ENCODE measurements at regions of chr11 and their contacts with region 1.

Region 1: DNA sequence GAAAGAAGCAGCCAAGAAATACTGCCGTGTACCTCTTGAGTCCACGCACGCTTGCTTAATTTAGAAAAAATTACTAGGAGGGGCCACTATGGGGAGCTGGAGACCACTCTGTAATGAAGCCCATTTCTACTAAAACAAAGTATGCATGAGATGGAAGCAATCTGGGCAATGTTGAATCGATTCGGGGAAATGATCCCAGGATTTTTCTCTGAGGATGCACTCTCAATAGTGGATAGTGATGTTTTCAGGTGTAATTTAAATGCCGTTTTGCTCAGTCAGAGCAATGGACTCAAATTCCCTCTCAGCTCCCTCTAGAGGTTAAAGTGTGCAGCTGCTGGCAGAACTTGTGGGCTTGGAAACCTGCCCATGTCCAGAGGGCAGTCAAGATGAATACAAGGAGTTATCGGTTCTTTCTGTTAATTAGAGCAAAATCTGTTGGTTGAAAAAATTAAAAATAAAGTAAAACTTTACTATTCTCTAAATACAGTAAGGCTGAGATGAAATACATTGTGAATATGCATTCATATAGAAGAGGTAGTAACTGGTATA is 64.1 kb downstream of the ME3 start:
- DNase-seq: peak; percentile 70
- H3K4me3 Mint-ChIP-seq: no peak overlapping the region
- H3K27ac Mint-ChIP-seq: no peak overlapping the region
- H3K4me1 Mint-ChIP-seq: peaks cover 29% of the 10 kb centered on the region
- H3K27me3 Mint-ChIP-seq: no peaks in the 10 kb centered on the region

Region 2: DNA sequence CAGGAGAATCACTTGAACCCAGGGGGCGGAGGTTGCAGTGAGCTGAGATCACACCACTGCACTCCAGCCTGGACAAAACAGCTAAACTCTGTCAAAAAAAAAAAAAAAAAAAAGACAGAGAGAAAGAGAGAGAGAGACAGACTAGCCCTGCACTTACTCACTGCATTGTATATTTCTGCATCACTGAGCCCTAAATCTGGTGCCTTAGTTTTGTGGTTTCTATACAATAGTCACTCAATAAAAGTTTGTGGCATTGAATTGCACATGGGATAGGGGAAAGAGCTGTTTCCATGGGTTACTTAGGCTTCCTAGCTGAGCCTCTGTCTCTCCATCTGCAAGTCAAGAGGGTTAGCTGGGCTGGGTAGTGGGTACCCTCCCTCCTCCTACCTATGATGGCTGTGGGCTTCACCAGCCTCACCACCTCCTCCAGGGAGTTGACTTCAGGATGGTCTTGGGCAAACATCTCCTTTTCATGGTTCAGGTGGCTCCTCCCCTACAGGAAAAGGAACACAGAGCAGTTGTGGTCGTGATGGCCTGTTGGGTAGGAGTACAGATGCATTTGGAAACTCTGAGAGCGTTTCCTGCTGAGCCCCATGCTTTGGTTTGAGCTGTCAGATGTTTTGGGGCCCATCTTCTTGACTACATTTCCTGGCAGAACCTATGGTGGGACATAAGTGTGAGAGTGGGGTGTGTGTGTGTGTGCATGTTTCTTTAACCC is 160.4 kb before region 1 on chr11:
- CTCF ChIA-PET with region 1: interaction called, 72 read pairs
- intact Hi-C with region 1: no loop called
- DNase-seq: peak; percentile 63
- H3K4me3 Mint-ChIP-seq: no peak overlapping the region
- H3K27ac Mint-ChIP-seq: no peak overlapping the region
- H3K4me1 Mint-ChIP-seq: peaks cover 24% of the 10 kb centered on the region
- H3K27me3 Mint-ChIP-seq: no peaks in the 10 kb centered on the region

Region 3: GRCh38 chr11:86620891-86621521 is 12.7 kb after region 1 on chr11:
- CTCF ChIA-PET with region 1: interaction called, 15 read pairs
- intact Hi-C with region 1: no loop called
- DNase-seq: no peak
- H3K4me3 Mint-ChIP-seq: no peak overlapping the region
- H3K27ac Mint-ChIP-seq: no peak overlapping the region
- H3K4me1 Mint-ChIP-seq: peaks cover 7% of the 10 kb centered on the region
- H3K27me3 Mint-ChIP-seq: no peaks in the 10 kb centered on the region

Region 4: DNA sequence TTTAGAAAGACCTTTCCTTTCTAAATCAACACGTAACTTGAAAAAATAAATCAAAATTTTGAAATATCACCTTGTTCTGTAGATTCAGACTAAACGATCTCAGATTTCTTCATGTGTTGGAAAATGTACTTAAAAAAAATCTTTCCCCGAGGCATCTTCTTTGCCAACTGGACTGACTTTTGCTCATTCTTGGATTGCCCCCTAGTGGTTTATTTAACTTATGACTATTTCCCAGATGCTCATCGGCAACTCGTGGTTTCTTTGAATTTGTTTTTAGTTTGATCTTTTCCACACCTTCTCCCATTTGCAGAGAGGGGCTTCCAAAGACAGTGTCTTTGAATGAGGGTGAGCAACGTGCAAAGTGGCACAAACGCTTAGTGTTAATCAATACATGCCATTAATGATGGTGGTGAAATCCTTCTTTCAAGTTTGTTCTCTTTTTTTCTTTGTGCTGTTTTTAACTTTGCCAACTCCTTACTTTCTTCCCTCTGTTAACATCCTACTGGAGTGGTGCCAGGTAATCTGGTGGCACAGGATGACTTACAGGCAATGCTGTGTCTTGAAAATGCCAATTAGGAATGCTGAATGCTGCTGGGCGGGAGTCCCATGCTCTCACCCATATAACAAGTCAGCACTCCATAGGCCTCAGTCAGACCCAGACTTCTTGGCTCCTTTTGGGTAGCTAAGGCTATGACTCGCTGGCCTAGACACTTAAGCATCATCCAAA is 210.3 kb after region 1 on chr11:
- CTCF ChIA-PET with region 1: interaction called, 15 read pairs
- intact Hi-C with region 1: loop called (anchors 1 kb)
- DNase-seq: no peak
- H3K4me3 Mint-ChIP-seq: no peak overlapping the region
- H3K27ac Mint-ChIP-seq: no peak overlapping the region
- H3K4me1 Mint-ChIP-seq: peaks cover 4% of the 10 kb centered on the region
- H3K27me3 Mint-ChIP-seq: peaks cover 21% of the 10 kb centered on the region

Region 5: GRCh38 chr11:86896441-86896841 is 288.1 kb after region 1 on chr11:
- CTCF ChIA-PET with region 1: no interaction called
- intact Hi-C with region 1: no loop called
- DNase-seq: no peak
- H3K4me3 Mint-ChIP-seq: no peak overlapping the region
- H3K27ac Mint-ChIP-seq: no peak overlapping the region
- H3K4me1 Mint-ChIP-seq: no peaks in the 10 kb centered on the region
- H3K27me3 Mint-ChIP-seq: peaks cover 6% of the 10 kb centered on the region

Measured in activated naive CD4-positive, alpha-beta T cell treated with anti-CD3 and anti-CD28 coated beads for 36 hours (primary cell).